RWPE1 (cell line): ENCODE measurements at regions of chr15 and their contacts with region 1.

Region 1: DNA sequence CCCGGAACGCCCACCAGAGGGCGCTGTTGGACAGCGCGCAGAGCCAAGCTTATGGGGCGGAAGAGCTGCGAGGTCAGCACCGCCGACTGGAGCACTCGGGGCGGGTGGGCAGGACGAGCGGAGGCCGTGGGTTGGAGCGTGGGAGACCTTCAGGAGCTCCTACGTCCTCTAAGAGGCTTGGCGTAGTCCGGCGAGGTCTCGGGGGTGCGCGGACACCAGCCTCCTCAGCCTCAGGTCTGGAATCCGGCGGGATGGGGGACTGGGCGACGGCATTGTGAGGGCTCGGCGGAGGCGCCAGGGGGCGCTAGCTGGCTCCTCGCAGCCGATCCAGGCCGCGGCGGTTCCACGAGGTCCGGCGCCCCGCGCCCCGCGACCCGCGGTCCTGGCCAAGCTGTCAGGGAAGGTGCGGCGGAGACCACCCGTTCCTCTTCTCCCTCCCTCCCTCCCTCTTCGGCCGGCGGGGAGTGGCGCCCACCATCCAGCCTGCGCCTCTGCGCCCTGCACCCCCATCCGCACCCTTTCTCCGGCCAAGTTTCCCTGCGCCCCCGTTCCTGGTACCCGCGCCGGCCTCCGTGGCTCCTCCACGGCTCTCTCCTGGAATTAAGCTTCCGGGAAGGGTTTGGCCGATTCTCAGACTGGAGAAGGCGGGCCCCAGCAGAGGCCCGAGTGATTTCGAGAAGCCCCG is 24.3 kb upstream of the POLG start:
- DNase-seq: peak; percentile 84
- H3K27ac ChIP-seq: no peak overlapping the region
- CTCF ChIP-seq: peak; percentile 99

Region 2: DNA sequence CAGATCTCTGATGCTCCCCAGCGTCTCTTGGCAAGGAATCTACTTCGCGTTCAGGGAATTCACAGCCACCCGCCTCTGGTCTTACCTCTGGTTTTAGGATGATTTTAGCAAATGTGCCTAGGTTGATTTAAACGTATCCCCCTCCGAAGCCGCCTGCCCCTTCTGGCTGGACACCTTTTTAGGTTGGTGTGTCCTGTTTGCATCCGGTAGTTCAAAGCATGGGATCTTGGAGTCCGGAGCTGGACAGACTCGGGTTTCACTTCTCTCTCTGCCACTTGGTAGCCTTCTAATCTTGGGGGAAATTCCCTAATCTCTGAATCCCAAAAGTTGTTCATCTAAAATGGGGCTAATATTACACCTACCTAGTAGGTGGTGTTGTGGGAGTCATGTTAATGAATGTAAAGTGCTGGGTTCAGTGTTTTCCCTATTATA is 114.4 kb before region 1 on chr15:
- CTCF ChIA-PET with region 1: no interaction called
- POLR2A ChIA-PET with region 1: no interaction called
- DNase-seq: peak; percentile 41
- H3K27ac ChIP-seq: peak overlapping the region; percentile 84
- CTCF ChIP-seq: no peak

Region 3: DNA sequence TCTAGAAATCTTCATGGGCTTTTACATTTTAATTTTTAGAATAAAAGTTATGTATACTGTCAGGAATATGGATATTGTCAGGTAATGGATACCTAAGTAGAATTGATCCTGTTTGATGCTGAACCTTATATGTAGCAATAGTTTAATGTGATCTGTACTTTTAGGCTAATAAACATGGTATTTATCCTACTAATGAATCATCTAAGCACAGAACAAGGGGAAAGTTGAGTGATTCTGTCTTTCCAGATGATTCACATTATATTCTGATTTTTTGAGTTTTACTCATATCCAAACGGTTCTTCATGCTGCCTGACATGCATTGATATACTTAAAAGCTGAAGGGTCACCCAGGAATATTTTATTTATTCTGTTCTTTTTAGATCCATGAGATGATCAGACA is 80.6 kb before region 1 on chr15:
- CTCF ChIA-PET with region 1: no interaction called
- POLR2A ChIA-PET with region 1: no interaction called
- DNase-seq: no peak
- H3K27ac ChIP-seq: no peak overlapping the region
- CTCF ChIP-seq: no peak

Region 4: DNA sequence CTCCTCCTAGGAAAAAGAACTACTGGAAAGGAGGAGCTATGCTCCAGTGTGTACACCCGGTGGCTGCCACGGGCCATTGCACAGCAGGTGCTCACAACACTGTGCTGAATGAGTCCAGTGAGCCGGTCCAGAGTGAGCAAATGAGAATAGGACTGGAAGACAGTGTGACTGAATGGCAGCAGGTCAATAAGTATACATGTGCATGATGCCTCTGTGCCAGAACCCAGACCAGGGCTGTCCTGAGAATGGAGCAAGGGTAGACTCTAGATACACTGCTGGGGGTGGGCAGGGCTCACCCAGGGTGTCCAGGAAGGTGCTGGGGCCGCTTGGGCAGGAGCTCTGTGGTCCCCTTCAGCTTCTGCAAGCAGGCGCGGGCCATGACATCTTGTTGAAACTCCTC is 32.6 kb before region 1 on chr15:
- CTCF ChIA-PET with region 1: no interaction called
- POLR2A ChIA-PET with region 1: no interaction called
- DNase-seq: no peak
- H3K27ac ChIP-seq: no peak overlapping the region
- CTCF ChIP-seq: no peak

Region 5: DNA sequence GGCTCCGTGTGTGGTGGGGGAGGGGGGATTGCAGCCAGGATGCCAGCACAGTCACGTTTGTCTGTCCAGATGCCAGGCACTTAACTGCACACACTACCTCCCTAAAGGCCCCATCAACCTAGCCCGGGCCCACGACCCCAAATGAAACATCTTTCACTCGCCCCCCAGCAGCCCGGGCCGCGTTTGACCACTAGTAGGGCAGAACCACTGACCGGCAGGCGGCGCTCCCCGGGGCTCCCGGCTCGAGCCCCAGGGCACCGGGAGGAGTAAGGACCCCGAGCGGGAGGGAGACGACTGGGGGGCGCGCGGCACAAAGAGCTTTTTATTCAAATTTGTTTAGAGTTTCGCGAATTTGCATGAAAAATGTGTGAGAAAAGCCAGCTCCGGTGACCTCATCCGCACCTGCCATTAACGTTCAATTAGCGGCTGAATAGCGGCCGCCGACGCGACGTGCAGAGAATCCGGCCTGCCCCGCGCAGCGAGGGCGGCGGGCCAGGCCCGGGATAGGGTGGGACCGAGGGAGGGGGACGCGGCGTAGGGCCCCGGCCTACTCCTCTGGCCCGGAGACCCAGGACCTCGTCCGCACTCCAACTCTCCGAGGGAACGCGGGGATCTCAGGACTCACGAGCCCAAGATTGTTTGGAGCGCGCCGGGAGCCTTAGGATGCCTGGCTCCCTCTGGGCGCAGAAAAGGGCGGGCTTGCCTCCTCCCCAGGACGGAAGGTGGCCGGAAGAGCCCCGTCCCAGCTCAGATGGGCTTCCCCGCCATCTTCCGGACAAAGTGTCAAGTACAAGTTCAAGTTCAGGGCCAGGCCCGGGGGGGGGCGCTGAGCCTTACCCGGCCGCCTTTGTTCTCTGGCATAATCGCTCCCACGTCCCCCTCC is 40.6 kb after region 1 on chr15:
- CTCF ChIA-PET with region 1: interaction called, 84 read pairs
- POLR2A ChIA-PET with region 1: no interaction called
- DNase-seq: peak; percentile 57
- H3K27ac ChIP-seq: no peak overlapping the region
- CTCF ChIP-seq: peak; percentile 12; the same call in 1 of the 2 replicates

Region 6: GRCh38 chr15:89416141-89416853 is 57.4 kb after region 1 on chr15:
- CTCF ChIA-PET with region 1: interaction called, 62 read pairs
- POLR2A ChIA-PET with region 1: interaction called, 3 read pairs
- DNase-seq: peak; percentile 89
- H3K27ac ChIP-seq: no peak overlapping the region
- CTCF ChIP-seq: peak; percentile 98

Region 7: DNA sequence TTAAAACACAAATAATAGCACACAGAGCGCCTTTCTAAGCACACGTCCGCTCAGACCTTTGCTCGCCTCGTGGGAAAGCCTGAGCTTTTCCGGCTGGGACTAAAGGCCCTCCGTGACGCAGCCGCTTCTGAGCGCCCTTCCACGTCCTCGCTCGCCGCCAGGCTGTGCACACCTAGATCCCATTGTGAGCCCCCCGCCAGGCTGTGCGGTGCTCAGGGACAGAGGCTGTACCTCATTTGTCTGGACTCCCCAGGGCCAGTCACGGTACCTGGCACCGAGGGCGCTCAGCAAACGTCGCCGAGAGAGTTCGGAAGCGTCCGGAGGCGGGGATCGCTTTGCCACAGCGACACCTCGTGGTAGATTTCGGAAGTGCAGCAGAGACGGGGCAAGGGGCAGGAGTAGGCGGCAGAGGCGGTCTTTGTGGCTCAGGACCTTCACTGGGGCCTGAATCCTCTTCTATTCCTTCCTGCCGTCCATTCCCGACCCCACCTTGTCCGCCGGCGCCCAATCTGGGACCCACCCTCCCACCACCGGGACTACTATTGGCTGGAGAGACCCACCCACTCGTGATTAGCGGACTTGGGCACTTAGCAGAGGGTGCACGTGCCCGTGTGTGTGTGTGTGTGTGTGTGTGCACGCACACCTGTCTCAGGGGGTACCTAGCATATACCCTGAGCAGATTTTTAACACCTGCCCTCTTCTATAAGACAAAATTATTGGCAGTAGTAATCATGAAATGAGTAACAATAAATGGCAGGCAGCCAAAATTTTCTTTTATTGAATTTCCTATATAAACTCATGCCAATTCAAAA is 71.8 kb after region 1 on chr15:
- CTCF ChIA-PET with region 1: interaction called, 38 read pairs
- POLR2A ChIA-PET with region 1: no interaction called
- DNase-seq: peak; percentile 88
- H3K27ac ChIP-seq: no peak overlapping the region
- CTCF ChIP-seq: peak; percentile 98

Region 8: DNA sequence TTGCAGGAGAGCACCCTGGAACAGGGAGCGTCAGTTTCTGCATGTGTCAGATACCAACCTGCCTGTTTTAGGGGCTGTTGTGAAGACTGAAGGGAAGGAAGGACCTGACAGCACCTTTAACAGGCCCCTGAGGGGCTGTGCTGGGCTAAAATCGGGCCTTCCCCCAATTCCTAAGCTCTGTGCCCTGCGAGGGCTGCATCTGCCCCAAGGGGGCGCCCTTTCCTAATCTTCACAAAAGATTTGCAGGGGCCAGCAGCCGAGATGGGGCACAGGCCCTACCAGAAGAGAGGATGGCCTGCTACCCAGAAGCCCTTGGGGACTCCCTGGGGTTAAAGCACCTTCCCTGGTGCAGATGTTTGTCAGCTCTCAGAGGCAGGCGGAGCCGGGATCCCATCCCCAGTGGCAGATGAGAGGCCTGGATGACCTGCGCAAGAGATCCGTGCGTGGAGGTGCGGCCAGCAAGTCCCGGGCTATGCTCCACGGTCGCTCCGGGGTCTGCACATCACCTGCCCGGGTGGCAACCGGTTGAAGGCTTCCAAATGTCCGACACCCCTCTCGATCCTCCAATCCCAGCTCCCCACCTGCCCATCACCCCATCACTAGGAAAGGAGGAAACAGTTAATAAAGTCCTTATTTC is 83.9 kb after region 1 on chr15:
- CTCF ChIA-PET with region 1: interaction called, 23 read pairs
- POLR2A ChIA-PET with region 1: no interaction called
- DNase-seq: peak; percentile 61
- H3K27ac ChIP-seq: no peak overlapping the region
- CTCF ChIP-seq: peak; percentile 82

Region 9: GRCh38 chr15:89556413-89557262 is 197.7 kb after region 1 on chr15:
- CTCF ChIA-PET with region 1: no interaction called
- POLR2A ChIA-PET with region 1: no interaction called
- DNase-seq: peak; percentile 68
- H3K27ac ChIP-seq: no peak overlapping the region
- CTCF ChIP-seq: peak; percentile 89